Activated T-helper 1 cell treated with anti-CD3 and anti-CD28 coated beads, Interleukin-12 subunit alpha, Interleukin-12 subunit beta, Interleukin-2, Interleukin-4 antibody, amounts not matched to agents 30 ng/mL and 10 ng/mL and 1 ng/mL, durations not matched to agents 14 hours and 24 hours and 36 hours (primary cell): ENCODE measurements at regions of chr12 and their contacts with region 1.

Region 1: DNA sequence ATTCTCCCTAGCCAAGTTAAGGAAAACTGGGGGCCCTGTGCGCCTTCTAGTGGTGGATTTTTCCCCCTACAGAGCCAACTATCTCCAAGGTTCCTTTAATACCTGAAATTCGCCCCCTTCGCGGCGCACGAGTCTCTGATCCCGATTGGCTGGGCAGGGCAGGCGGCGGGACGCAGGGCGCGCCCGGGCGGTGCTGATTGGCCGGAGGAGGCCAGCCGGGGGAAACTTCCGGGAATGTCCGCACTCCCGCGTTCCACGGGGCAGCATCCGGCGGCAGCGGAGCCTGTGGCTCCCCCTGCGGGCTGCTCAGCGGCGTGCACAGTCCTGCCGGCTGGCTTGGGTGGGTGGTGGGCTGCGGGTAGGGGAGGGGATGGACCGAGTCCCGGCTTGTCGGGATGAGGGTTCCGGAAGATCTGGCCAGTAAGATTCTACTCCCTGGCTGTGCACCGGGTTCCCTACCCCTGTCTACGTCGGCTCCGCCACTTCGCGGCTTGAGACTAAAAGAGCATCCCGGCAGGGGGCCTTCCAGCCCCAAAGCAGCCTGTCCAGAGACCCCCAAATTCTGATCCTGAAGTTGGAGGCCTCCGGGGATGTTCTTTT is at the start of gene NABP2:
- DNase-seq: peak; percentile 94
- H3K4me3 Mint-ChIP-seq: peak within 1 kb of the TSS; percentile 99
- H3K27ac Mint-ChIP-seq: peak within 1 kb of the TSS; percentile 81
- H3K4me1 Mint-ChIP-seq: peaks cover 51% of the 10 kb centered on the region
- H3K27me3 Mint-ChIP-seq: no peaks in the 10 kb centered on the region
- total RNA-seq, gene NABP2: 97.5 and 102 TPM in 2 replicates

Region 2: GRCh38 chr12:55738123-55739024 is 485.8 kb before region 1 on chr12:
- intact Hi-C with region 1: loop called (anchors 2 kb)
- DNase-seq: peak; percentile 73
- H3K4me3 Mint-ChIP-seq: peak overlapping the region; percentile 79
- H3K27ac Mint-ChIP-seq: peak overlapping the region; percentile 73
- H3K4me1 Mint-ChIP-seq: peaks cover 44% of the 10 kb centered on the region
- H3K27me3 Mint-ChIP-seq: peaks cover 3% of the 10 kb centered on the region

Region 3: GRCh38 chr12:55973598-55974307 is 250.4 kb before region 1 on chr12 and contains the start of gene RAB5B:
- intact Hi-C with region 1: loop called (anchors 5 kb)
- DNase-seq: peak; percentile 98
- H3K4me3 Mint-ChIP-seq: no peak within 1 kb of the TSS
- H3K27ac Mint-ChIP-seq: no peak within 1 kb of the TSS
- H3K4me1 Mint-ChIP-seq: peaks cover 20% of the 10 kb centered on the region
- H3K27me3 Mint-ChIP-seq: no peaks in the 10 kb centered on the region
- total RNA-seq, gene RAB5B: 42.6 and 47.0 TPM in 2 replicates

Region 4: DNA sequence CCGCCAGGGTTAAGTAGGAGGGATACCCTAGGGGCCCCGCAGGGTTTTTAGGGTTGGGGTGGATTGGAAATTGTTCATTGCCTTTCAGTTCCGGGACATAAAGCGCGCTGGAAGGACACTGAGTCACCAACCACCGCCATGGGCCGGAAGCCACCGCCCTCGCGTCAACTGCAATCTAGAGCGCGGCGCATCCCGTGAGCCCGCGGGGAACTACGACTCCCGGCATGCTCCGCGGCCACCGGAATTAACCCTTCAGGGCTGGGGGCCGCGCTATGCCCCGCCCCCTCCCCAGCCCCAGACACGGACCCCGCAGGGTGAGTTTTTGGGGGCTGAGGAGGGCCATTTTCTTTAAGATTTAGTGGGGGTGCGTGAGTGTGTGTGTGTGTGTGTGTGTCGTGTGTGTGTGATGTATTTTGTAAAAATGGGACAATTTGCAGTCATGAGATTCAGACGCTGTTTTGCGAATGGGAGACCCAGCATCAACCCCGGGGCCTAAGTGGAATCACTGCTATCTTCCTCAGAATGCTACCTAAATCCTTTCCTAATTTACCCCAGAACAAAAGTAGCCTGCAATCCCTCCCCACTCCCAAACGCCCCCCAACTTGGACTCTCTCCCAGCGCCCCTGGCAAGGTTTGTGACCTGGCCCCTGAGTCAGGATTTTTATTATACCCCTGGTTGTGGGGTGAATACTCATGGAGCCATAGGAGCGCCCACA is 71.7 kb before region 1 on chr12 and contains the start of gene MYL6B:
- intact Hi-C with region 1: loop called (anchors 1 kb)
- DNase-seq: peak; percentile 92
- H3K4me3 Mint-ChIP-seq: peak within 1 kb of the TSS; percentile 88
- H3K27ac Mint-ChIP-seq: peak within 1 kb of the TSS; percentile 99
- H3K4me1 Mint-ChIP-seq: peaks cover 39% of the 10 kb centered on the region
- H3K27me3 Mint-ChIP-seq: no peaks in the 10 kb centered on the region
- total RNA-seq, gene MYL6B: 58.8 and 67.6 TPM in 2 replicates

Region 5: DNA sequence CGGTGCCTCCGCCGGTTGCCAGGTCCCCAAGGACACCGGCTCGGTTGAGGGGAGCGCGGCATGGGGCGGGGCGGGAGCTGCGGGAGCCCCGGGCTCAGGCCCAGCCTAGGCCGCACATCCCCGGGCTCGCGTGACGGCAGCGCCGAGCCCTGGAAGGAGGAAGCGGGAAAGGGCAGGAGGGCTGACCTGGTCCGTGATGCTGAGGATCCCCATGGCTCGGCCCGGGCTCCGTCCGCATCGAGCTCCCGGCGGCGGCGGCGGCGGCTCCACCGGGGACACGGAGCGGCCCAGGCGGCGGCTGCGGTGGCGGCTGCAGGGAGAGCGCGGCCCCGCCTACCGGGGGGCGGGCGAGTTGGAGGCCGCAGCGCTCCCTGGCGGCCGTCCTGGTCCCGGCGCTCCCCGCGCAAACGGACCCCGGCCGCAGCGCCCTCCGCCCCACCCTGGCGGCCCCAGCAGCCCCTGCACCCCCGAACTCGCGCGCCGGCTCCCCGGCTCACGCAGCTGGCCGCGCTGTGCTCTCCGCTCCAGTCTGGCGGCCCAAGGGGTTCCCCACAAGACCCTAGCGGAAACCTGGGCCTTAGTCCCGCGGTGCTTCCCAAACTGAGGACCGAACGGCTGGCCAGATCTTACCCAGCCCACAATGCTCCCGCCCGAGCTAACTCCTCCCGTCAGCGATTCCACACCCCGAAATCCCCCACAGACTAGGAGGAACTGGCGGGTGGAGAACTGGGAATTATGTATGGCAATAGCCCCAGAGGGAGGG is 34.0 kb after region 1 on chr12 and contains the start of gene ANKRD52:
- intact Hi-C with region 1: loop called (anchors 1 kb)
- DNase-seq: peak; percentile 82
- H3K4me3 Mint-ChIP-seq: peak within 1 kb of the TSS; percentile 90
- H3K27ac Mint-ChIP-seq: peak within 1 kb of the TSS; percentile 83
- H3K4me1 Mint-ChIP-seq: peaks cover 22% of the 10 kb centered on the region
- H3K27me3 Mint-ChIP-seq: no peaks in the 10 kb centered on the region
- total RNA-seq, gene ANKRD52: 71.0 and 83.9 TPM in 2 replicates

Region 6: GRCh38 chr12:56315622-56316473 is 91.6 kb after region 1 on chr12 and contains the start of gene CNPY2:
- intact Hi-C with region 1: loop called (anchors 1 kb)
- DNase-seq: peak; percentile 83
- H3K4me3 Mint-ChIP-seq: peak within 1 kb of the TSS; percentile 98
- H3K27ac Mint-ChIP-seq: peak within 1 kb of the TSS; percentile 96
- H3K4me1 Mint-ChIP-seq: peaks cover 12% of the 10 kb centered on the region
- H3K27me3 Mint-ChIP-seq: no peaks in the 10 kb centered on the region
- total RNA-seq, gene CNPY2: 170 and 172 TPM in 2 replicates

Region 7: DNA sequence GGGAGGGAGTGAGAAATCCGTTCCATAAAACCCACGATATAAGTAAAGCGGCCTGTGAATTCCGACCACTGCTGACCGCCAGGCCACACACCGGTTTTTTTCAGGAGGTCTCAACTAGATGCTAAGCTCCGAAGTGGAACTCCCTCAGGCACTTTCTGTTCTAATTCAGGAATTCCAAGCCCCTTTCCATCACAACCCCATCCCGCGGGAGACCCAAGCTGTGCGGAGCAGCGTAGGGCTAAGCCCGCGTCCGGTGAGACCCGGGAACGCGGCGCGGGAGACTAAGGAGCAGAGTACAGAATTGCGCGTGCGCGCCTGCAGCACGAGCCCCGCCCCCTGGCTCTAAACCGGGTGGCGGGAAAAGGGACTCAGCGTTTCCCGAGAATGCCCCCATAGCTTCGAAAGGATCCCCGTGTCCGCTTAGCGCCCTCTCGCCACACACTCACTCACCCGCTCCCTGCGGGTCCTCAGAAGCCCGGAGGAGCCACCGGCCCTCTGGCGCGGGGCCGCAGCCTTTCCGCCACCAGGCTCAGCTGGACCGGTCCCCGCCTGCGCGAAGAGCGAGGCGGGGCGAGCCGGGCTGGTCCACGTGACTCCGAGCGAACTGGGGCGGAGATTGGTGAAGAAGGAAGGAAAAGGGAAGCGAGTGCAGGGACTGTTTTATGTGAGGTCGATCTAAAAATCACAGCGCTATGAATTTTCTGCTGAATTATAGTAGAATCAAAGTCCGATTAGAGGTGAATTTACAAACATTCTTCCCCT is 224.8 kb after region 1 on chr12 and contains the start of gene TIMELESS:
- intact Hi-C with region 1: loop called (anchors 1 kb)
- DNase-seq: peak; percentile 87
- H3K4me3 Mint-ChIP-seq: peak within 1 kb of the TSS; percentile 92
- H3K27ac Mint-ChIP-seq: peak within 1 kb of the TSS; percentile 85
- H3K4me1 Mint-ChIP-seq: peaks cover 27% of the 10 kb centered on the region
- H3K27me3 Mint-ChIP-seq: no peaks in the 10 kb centered on the region
- total RNA-seq, gene TIMELESS: 44.9 and 45.8 TPM in 2 replicates